A549 (cell line): ENCODE measurements at regions of chrX and their contacts with region 1.

Region 1: DNA sequence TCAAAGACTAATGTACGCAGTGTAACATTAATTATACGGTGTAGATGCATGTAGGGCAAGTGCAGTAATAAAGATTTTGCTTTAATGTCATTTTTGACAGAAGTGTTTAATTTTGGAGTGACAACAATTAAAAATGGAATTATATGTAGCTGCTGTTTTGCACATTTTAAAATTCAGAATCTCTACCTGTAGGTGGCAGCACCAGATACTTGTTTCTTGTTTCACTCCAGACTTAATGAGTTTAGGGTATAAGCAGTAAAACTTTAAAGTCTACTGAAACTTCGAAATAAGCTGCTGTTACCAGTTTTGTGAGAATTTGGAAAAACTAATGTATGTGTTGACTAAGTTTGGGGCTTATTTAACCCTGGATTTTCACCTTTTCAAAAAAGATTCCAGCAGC is 144.9 kb downstream of the POLA1 start:
- DNase-seq: peak in 1 of 2 experiments; percentile 31
- ATAC-seq: peak in 1 of 2 experiments; percentile 60; a peak in 2 of 6 replicates
- H3K4me3 ChIP-seq: no peak overlapping the region
- H3K27ac ChIP-seq: peak overlapping the region in 1 of 2 experiments; percentile 54; a peak in 2 of 6 replicates
- H3K4me1 ChIP-seq: peaks cover 16% of the 10 kb centered on the region; the same call in 2 of the 3 replicates
- CTCF ChIP-seq: peak; percentile 73
- EP300 ChIP-seq: no peak
- POLR2A ChIP-seq: no peak
- RAD21 ChIP-seq: peak; percentile 56 to 75

Region 2: GRCh38 chrX:24858004-24858746 is 19.5 kb after region 1 on chrX:
- CTCF ChIA-PET with region 1: interaction called, 18 read pairs
- POLR2A ChIA-PET with region 1: no interaction called
- DNase-seq: peak in 1 of 2 experiments; percentile 15
- ATAC-seq: peak; percentile 13 to 56; a peak in 4 of 6 replicates
- H3K4me3 ChIP-seq: no peak overlapping the region
- H3K27ac ChIP-seq: peak overlapping the region; percentile 85 to 89; a peak in 5 of 6 replicates
- H3K4me1 ChIP-seq: peaks cover 43% of the 10 kb centered on the region
- CTCF ChIP-seq: no peak
- EP300 ChIP-seq: no peak
- POLR2A ChIP-seq: no peak
- RAD21 ChIP-seq: no peak

Region 3: GRCh38 chrX:24946369-24946768 is 107.7 kb after region 1 on chrX:
- CTCF ChIA-PET with region 1: no interaction called
- POLR2A ChIA-PET with region 1: no interaction called
- DNase-seq: no peak
- ATAC-seq: no peak
- H3K4me3 ChIP-seq: no peak overlapping the region
- H3K27ac ChIP-seq: no peak overlapping the region
- H3K4me1 ChIP-seq: no peaks in the 10 kb centered on the region
- CTCF ChIP-seq: no peak
- EP300 ChIP-seq: no peak
- POLR2A ChIP-seq: no peak
- RAD21 ChIP-seq: no peak